Naive thymus-derived CD4-positive, alpha-beta T cell (primary cell): ENCODE measurements at regions of chr15 and their contacts with region 1.

Region 1: GRCh38 chr15:45611305-45611704 is 23.5 kb upstream of the SQOR start:
- DNase-seq: peak in 2 of 9 donors; percentile 9 to 11
- ATAC-seq: no peak
- H3K4me3 ChIP-seq: no peak overlapping the region
- H3K4me3 Mint-ChIP-seq: no peak overlapping the region
- H3K27ac ChIP-seq: no peak overlapping the region
- H3K27ac Mint-ChIP-seq: peak overlapping the region in 2 of 9 donors; percentile 5 to 7
- H3K4me1 ChIP-seq: no peaks in the 10 kb centered on the region
- H3K4me1 Mint-ChIP-seq: peaks cover 0 to 15% (median 0%) of the 10 kb centered on the region in 7 donors
- H3K27me3 ChIP-seq: no peaks in the 10 kb centered on the region
- H3K27me3 Mint-ChIP-seq: no peaks in the 10 kb centered on the region

Region 2: DNA sequence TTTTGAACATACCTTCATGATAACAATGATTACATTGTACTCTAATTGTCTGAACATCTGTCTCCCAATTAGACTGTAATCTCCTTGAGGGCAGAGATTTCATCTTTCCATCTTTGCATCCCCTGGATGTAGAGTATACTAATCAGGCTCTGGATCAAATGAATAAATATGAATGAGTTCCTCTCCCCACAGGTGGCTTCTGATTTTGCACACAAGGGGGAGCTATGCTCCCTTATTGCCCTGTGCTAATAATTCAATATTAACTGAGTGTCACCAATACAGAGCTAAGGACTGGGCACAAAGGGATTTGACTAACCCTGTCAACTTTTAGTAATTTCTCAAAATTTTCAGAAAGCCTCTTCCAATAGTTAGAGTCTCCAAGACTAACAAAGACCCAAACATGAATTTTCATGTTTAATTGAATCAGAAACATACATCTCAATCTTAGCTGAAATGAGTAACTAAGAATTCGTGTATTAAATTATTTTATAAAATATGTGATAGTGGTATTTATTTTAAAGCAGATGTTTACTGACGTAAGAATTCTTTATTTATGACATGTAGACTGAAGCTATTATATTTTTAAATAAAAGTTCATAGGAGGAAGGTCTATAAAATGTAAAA is 484.7 kb before region 1 on chr15:
- CTCF ChIA-PET with region 1: no interaction called
- POLR2A ChIA-PET with region 1: no interaction called
- intact Hi-C with region 1: loop called in 1 of 2 experiments (anchors 10 kb)
- DNase-seq: peak in 7 of 9 donors; percentile 17 to 51 (median 43)
- ATAC-seq: peak; percentile 72
- H3K4me3 ChIP-seq: no peak overlapping the region
- H3K4me3 Mint-ChIP-seq: no peak overlapping the region
- H3K27ac ChIP-seq: no peak overlapping the region
- H3K27ac Mint-ChIP-seq: no peak overlapping the region
- H3K4me1 ChIP-seq: no peaks in the 10 kb centered on the region
- H3K4me1 Mint-ChIP-seq: peaks cover 0 to 13% (median 6%) of the 10 kb centered on the region in 7 donors
- H3K27me3 ChIP-seq: peaks cover 0 to 8% of the 10 kb centered on the region in 2 donors
- H3K27me3 Mint-ChIP-seq: peaks cover 59 to 70% (median 61%) of the 10 kb centered on the region in 5 donors

Region 3: GRCh38 chr15:45429974-45430792 is 181.1 kb before region 1 on chr15:
- CTCF ChIA-PET with region 1: interaction called, 6 read pairs
- POLR2A ChIA-PET with region 1: interaction called, 3 read pairs
- intact Hi-C with region 1: loop called (anchors 1 kb)
- DNase-seq: peak; percentile 68 to 95 (median 83)
- ATAC-seq: peak; percentile 97
- H3K4me3 ChIP-seq: peak overlapping the region; percentile 53
- H3K4me3 Mint-ChIP-seq: peak overlapping the region in 9 of 10 donors; percentile 40 to 72 (median 62)
- H3K27ac ChIP-seq: no peak overlapping the region
- H3K27ac Mint-ChIP-seq: peak overlapping the region in 1 of 9 donors; percentile 13
- H3K4me1 ChIP-seq: no peaks in the 10 kb centered on the region
- H3K4me1 Mint-ChIP-seq: peaks cover 0 to 5% (median 1%) of the 10 kb centered on the region in 7 donors
- H3K27me3 ChIP-seq: no peaks in the 10 kb centered on the region
- H3K27me3 Mint-ChIP-seq: peaks cover 0 to 37% (median 5%) of the 10 kb centered on the region in 5 donors

Region 4: GRCh38 chr15:45522328-45523160 is 88.8 kb before region 1 on chr15 and contains the start of gene SLC30A4:
- CTCF ChIA-PET with region 1: no interaction called
- POLR2A ChIA-PET with region 1: no interaction called
- intact Hi-C with region 1: loop called (anchors 1 kb)
- DNase-seq: peak; percentile 49 to 75 (median 66)
- ATAC-seq: peak; percentile 92
- H3K4me3 ChIP-seq: peak within 1 kb of the TSS; percentile 66
- H3K4me3 Mint-ChIP-seq: peak within 1 kb of the TSS; percentile 93 to 98 (median 94)
- H3K27ac ChIP-seq: peak within 1 kb of the TSS; percentile 64
- H3K27ac Mint-ChIP-seq: peak within 1 kb of the TSS; percentile 79 to 90 (median 85)
- H3K4me1 ChIP-seq: peaks cover 0 to 8% of the 10 kb centered on the region in 2 donors
- H3K4me1 Mint-ChIP-seq: peaks cover 23 to 43% (median 33%) of the 10 kb centered on the region in 7 donors
- H3K27me3 ChIP-seq: no peaks in the 10 kb centered on the region
- H3K27me3 Mint-ChIP-seq: peaks cover 0 to 40% (median 0%) of the 10 kb centered on the region in 5 donors
- total RNA-seq, gene SLC30A4: 2.6 to 4.4 (median 3.0) TPM

Region 5: GRCh38 chr15:45587095-45587860 is 24.0 kb before region 1 on chr15 and contains the start of gene BLOC1S6:
- CTCF ChIA-PET with region 1: interaction called, 14 read pairs
- POLR2A ChIA-PET with region 1: interaction called, 4 read pairs
- intact Hi-C with region 1: no loop called
- DNase-seq: peak; percentile 81 to 91 (median 87)
- ATAC-seq: peak; percentile 87
- H3K4me3 ChIP-seq: peak within 1 kb of the TSS; percentile 87
- H3K4me3 Mint-ChIP-seq: peak within 1 kb of the TSS; percentile 96 to 100 (median 98)
- H3K27ac ChIP-seq: peak within 1 kb of the TSS; percentile 97
- H3K27ac Mint-ChIP-seq: peak within 1 kb of the TSS; percentile 100
- H3K4me1 ChIP-seq: peaks cover 25 to 26% of the 10 kb centered on the region in 2 donors
- H3K4me1 Mint-ChIP-seq: peaks cover 27 to 55% (median 38%) of the 10 kb centered on the region in 7 donors
- H3K27me3 ChIP-seq: no peaks in the 10 kb centered on the region
- H3K27me3 Mint-ChIP-seq: no peaks in the 10 kb centered on the region
- total RNA-seq, gene BLOC1S6: 34.4 to 63.9 (median 50.9) TPM

Region 6: DNA sequence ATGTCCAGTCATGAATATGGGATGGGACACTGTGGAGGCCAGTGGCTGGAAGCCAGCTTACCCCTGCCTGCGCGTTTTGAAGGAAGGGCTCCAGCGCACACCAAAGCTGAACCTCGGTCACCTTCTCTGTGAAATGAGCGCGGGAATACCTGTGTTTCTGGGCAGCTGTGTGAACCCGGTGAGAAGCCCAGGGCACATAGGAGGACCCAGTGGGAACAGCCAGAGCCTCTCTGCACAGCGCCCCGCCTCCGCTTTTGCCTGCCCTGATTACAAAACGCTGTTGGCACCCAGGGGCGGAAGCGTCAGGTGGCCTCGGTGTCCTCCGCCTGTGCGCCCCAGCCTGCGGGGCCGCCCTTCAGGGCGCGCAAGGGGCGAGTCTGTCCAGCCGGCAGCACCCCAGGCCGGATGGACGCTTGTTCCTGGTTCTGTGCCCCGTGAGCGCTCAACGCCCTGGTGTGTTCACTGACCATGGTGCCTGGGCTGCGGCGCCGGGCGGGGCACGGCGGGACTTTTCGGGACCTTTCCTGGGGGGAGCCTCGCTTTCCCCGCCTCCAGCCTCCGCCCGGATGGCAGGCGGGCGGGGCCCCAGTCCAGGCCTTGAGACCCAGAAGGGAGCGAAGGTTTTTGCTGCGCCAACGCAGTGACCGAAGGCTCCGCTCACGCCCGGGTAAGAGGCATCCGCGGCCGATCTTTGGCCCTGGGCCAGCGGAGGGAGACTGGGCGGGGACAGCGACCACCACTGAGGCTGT is 23.3 kb after region 1 on chr15 and contains the start of gene SQOR:
- CTCF ChIA-PET with region 1: no interaction called
- POLR2A ChIA-PET with region 1: interaction called, 4 read pairs
- intact Hi-C with region 1: loop called (anchors 1 to 2 kb)
- DNase-seq: peak; percentile 46 to 78 (median 58)
- ATAC-seq: peak; percentile 72
- H3K4me3 ChIP-seq: peak within 1 kb of the TSS; percentile 84
- H3K4me3 Mint-ChIP-seq: peak within 1 kb of the TSS; percentile 91 to 98 (median 96)
- H3K27ac ChIP-seq: peak within 1 kb of the TSS; percentile 69
- H3K27ac Mint-ChIP-seq: peak within 1 kb of the TSS; percentile 84 to 96 (median 91)
- H3K4me1 ChIP-seq: peaks cover 24 to 27% of the 10 kb centered on the region in 2 donors
- H3K4me1 Mint-ChIP-seq: peaks cover 24 to 46% (median 42%) of the 10 kb centered on the region in 7 donors
- H3K27me3 ChIP-seq: no peaks in the 10 kb centered on the region
- H3K27me3 Mint-ChIP-seq: peaks cover 0 to 13% (median 0%) of the 10 kb centered on the region in 5 donors
- total RNA-seq, gene SQOR: 20.6 to 115 (median 32.6) TPM